Aorta (tissue), 5 donors: ENCODE measurements at regions of chr2 and their contacts with region 1.

Region 1: GRCh38 chr2:209463226-209463625 is 39.4 kb downstream of the MAP2 start:
- DNase-seq: no peak
- ATAC-seq: no peak
- H3K4me3 ChIP-seq: no peak overlapping the region
- H3K27ac ChIP-seq: no peak overlapping the region
- H3K4me1 ChIP-seq: peaks cover 3% of the 10 kb centered on the region in 2 donors
- H3K27me3 ChIP-seq: no peaks in the 10 kb centered on the region

Region 2: DNA sequence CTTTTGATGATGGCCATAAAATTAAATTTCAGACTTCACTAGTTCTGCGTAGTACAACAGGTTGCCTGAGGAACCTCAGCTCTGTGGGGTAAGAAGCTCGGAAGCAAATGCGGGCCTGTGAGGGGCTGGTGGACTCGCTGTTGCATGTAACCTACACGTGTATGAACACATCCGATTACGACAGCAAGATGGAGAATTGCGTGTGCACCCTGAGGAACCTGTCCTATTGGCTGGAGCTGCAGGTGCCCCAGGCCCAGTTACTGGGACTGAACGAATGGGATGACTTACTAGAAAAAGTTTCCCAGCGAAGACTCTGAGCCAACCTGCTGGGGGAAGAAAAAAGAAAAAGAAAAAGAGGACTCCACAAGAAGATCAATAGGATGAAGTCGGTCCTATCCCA is 283.6 kb before region 1 on chr2:
- intact Hi-C with region 1: no loop called
- DNase-seq: no peak
- ATAC-seq: no peak
- H3K4me3 ChIP-seq: no peak overlapping the region
- H3K27ac ChIP-seq: no peak overlapping the region
- H3K4me1 ChIP-seq: no peaks in the 10 kb centered on the region
- H3K27me3 ChIP-seq: no peaks in the 10 kb centered on the region

Region 3: GRCh38 chr2:209423562-209424198 is 39.5 kb before region 1 on chr2 and contains the start of gene MAP2:
- intact Hi-C with region 1: loop called in 1 of 2 experiments (anchors 5 kb)
- DNase-seq: peak; percentile 90 to 96
- ATAC-seq: peak; percentile 96
- H3K4me3 ChIP-seq: peak within 1 kb of the TSS; percentile 50 to 81
- H3K27ac ChIP-seq: peak within 1 kb of the TSS; percentile 30 to 70
- H3K4me1 ChIP-seq: no peaks in the 10 kb centered on the region
- H3K27me3 ChIP-seq: no peaks in the 10 kb centered on the region
- total RNA-seq, gene MAP2: 19.6 to 59.7 TPM

Region 4: DNA sequence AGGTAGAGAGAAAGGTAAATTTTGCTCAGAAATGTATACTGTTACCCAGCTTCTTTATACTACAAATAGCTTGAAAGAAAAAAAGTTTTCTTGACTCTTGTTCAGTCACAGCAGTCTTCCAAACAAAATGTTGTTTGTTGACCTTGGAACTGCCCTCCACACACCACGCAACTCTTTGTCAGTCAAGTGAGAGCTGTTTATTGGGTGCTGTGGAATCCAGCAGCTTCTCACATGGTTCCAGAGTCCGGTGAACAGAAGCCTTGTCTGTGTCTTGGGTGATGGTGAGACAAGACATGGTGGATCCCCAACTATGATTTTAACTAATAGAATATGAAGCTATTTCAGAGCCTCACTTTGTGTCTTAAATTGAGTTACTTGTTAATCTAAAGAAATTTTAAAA is 73.1 kb after region 1 on chr2:
- intact Hi-C with region 1: no loop called
- DNase-seq: no peak
- ATAC-seq: no peak
- H3K4me3 ChIP-seq: no peak overlapping the region
- H3K27ac ChIP-seq: no peak overlapping the region
- H3K4me1 ChIP-seq: peaks cover 0 to 2% of the 10 kb centered on the region in 2 donors
- H3K27me3 ChIP-seq: no peaks in the 10 kb centered on the region